CD4-positive, alpha-beta memory T cell (primary cell): ENCODE measurements at regions of chr10 and their contacts with region 1.

Region 1: DNA sequence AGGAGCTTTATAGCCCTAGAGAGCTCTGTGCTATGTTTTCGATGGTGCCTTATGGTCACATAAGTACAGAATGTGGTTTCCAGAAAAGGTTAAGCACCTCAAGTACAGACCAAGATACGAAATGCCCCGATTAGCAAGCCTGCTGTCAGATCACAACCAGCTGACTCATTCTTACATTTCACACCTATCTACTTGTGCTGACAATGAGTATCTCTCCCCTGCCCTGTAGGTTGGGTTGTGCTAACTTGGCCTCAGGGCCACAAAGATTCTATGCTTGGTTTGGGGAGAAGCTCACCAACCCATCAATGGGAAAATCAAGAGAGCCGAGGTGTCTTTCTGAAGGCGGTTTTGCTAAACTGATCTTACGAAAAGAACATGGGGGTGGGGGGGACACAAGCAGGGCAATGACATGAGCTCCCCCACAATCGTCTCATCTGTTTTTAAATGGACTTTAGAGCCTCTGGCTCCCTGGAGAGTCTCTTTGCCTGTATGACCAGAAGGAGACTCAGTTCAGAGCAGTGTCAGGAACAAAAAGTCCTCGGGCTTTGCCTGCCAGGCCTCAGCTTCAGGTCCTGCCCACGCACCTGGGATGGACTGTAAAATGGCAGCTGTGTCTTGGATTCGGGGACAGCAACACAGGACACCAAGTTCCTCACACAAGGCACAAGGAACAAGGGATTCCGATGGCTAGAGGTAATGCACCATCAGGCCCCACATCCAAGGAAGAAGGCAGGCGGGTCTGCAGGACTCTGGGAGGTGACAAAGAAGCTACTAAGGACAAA is 55.1 kb downstream of the FAM53B start:
- DNase-seq: peak; percentile 50 to 81 (median 52)
- H3K4me3 ChIP-seq: no peak overlapping the region
- H3K4me3 Mint-ChIP-seq: peak overlapping the region in 7 of 8 donors; percentile 9 to 88 (median 76)
- H3K27ac ChIP-seq: peak overlapping the region; percentile 42
- H3K27ac Mint-ChIP-seq: peak overlapping the region; percentile 87 to 98 (median 91)
- H3K4me1 ChIP-seq: peaks cover 95% of the 10 kb centered on the region
- H3K4me1 Mint-ChIP-seq: peaks cover 59 to 94% (median 79%) of the 10 kb centered on the region in 4 donors
- H3K27me3 ChIP-seq: no peaks in the 10 kb centered on the region
- H3K27me3 Mint-ChIP-seq: no peaks in the 10 kb centered on the region

Region 2: DNA sequence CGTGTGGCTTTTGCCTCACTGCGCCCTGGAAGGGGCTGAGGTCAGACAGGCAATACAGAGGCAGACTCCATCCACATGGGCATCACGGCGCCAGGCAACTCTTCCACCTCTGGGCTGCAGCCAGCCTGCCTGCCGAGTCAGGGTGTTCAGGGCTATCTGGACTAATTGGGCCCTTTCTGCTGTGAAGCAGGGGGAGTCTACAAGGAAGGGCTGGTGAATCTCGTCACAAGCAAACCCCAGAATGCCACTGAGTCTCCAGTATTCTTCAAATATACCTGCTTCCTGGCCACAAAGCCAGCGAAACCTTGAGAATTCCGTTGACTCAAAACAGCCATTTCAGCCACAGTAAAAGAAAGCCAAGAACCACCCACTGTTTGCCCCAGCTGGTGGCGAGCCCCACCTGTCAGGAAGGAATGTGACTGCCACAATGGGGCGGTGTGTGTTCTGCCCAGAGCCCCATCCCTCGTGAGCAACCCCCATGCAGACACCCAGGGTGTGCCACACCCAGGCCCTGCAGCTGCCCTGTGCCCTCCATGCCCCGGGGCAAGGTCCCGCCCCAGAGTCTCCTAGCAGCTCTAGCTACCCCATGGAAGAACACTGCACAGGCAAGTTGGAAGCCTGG is 62.2 kb before region 1 on chr10:
- CTCF ChIA-PET with region 1: interaction called, 5 read pairs
- POLR2A ChIA-PET with region 1: interaction called, 10 read pairs
- intact Hi-C with region 1: no loop called
- DNase-seq: peak; percentile 46 to 60 (median 55)
- H3K4me3 ChIP-seq: peak overlapping the region; percentile 11 to 14
- H3K4me3 Mint-ChIP-seq: peak overlapping the region in 7 of 8 donors; percentile 36 to 76 (median 69)
- H3K27ac ChIP-seq: peak overlapping the region; percentile 49
- H3K27ac Mint-ChIP-seq: peak overlapping the region; percentile 82 to 96 (median 89)
- H3K4me1 ChIP-seq: peaks cover 68% of the 10 kb centered on the region
- H3K4me1 Mint-ChIP-seq: peaks cover 34 to 81% (median 50%) of the 10 kb centered on the region in 4 donors
- H3K27me3 ChIP-seq: no peaks in the 10 kb centered on the region
- H3K27me3 Mint-ChIP-seq: no peaks in the 10 kb centered on the region

Region 3: GRCh38 chr10:124657806-124658205 is 31.3 kb before region 1 on chr10:
- CTCF ChIA-PET with region 1: interaction called, 10 read pairs
- POLR2A ChIA-PET with region 1: interaction called, 15 read pairs
- intact Hi-C with region 1: no loop called
- DNase-seq: peak; percentile 60 to 79 (median 77)
- H3K4me3 ChIP-seq: peak overlapping the region; percentile 13 to 36
- H3K4me3 Mint-ChIP-seq: peak overlapping the region; percentile 31 to 87 (median 78)
- H3K27ac ChIP-seq: peak overlapping the region; percentile 67
- H3K27ac Mint-ChIP-seq: peak overlapping the region; percentile 88 to 98 (median 95)
- H3K4me1 ChIP-seq: peaks cover 92% of the 10 kb centered on the region
- H3K4me1 Mint-ChIP-seq: peaks cover 68 to 97% (median 84%) of the 10 kb centered on the region in 4 donors
- H3K27me3 ChIP-seq: no peaks in the 10 kb centered on the region
- H3K27me3 Mint-ChIP-seq: no peaks in the 10 kb centered on the region

Region 4: DNA sequence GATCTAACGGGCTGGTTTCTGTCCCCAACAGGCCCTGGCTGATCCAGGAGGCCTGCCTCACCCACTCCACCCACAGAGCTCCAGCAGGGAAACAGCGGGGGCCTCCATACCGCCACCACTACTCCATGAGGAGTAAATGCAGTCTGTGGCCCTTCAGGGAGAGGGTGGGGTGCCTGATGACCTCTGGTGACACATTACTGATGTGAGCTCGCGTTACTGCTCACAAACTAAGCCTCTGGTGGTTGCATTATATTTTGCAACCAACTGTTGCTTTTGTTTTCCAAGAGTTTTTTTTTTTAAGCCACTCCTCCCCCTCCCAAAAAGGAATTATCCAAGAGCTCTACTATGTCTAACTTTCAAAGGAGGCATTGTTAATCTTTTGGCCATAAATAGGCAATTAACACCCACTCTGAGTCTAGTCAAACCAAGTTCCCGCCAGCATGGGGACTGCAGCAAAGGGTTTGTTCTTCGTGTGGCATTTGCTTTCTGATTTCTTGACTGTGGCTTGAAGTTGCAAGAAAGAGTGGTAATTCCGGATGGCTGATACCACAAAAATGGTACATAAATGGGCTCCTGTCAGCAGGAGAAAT is 17.5 kb before region 1 on chr10:
- CTCF ChIA-PET with region 1: interaction called, 14 read pairs
- POLR2A ChIA-PET with region 1: interaction called, 10 read pairs
- intact Hi-C with region 1: no loop called
- DNase-seq: peak in 1 of 5 donors; percentile 33
- H3K4me3 ChIP-seq: no peak overlapping the region
- H3K4me3 Mint-ChIP-seq: peak overlapping the region in 7 of 8 donors; percentile 53 to 84 (median 67)
- H3K27ac ChIP-seq: peak overlapping the region; percentile 43
- H3K27ac Mint-ChIP-seq: peak overlapping the region; percentile 83 to 96 (median 90)
- H3K4me1 ChIP-seq: peaks cover 100% of the 10 kb centered on the region
- H3K4me1 Mint-ChIP-seq: peaks cover 68 to 99% (median 88%) of the 10 kb centered on the region in 4 donors
- H3K27me3 ChIP-seq: no peaks in the 10 kb centered on the region
- H3K27me3 Mint-ChIP-seq: no peaks in the 10 kb centered on the region

Region 5: GRCh38 chr10:124677749-124678556 is 11.1 kb before region 1 on chr10:
- CTCF ChIA-PET with region 1: interaction called, 25 read pairs
- POLR2A ChIA-PET with region 1: interaction called, 42 read pairs
- intact Hi-C with region 1: no loop called
- DNase-seq: no peak
- H3K4me3 ChIP-seq: peak overlapping the region; percentile 36 to 56
- H3K4me3 Mint-ChIP-seq: peak overlapping the region; percentile 76 to 88 (median 79)
- H3K27ac ChIP-seq: peak overlapping the region; percentile 54
- H3K27ac Mint-ChIP-seq: peak overlapping the region; percentile 85 to 97 (median 92)
- H3K4me1 ChIP-seq: peaks cover 96% of the 10 kb centered on the region
- H3K4me1 Mint-ChIP-seq: peaks cover 70 to 99% (median 89%) of the 10 kb centered on the region in 4 donors
- H3K27me3 ChIP-seq: no peaks in the 10 kb centered on the region
- H3K27me3 Mint-ChIP-seq: no peaks in the 10 kb centered on the region

Region 6: GRCh38 chr10:124703778-124704427 is 14.8 kb after region 1 on chr10:
- CTCF ChIA-PET with region 1: interaction called, 50 read pairs
- POLR2A ChIA-PET with region 1: interaction called, 48 read pairs
- intact Hi-C with region 1: loop called (anchors 2 kb)
- DNase-seq: peak in 1 of 5 donors; percentile 15
- H3K4me3 ChIP-seq: no peak overlapping the region
- H3K4me3 Mint-ChIP-seq: peak overlapping the region in 7 of 8 donors; percentile 23 to 90 (median 58)
- H3K27ac ChIP-seq: peak overlapping the region; percentile 90
- H3K27ac Mint-ChIP-seq: peak overlapping the region; percentile 95 to 99 (median 97)
- H3K4me1 ChIP-seq: peaks cover 100% of the 10 kb centered on the region
- H3K4me1 Mint-ChIP-seq: peaks cover 72 to 100% (median 93%) of the 10 kb centered on the region in 4 donors
- H3K27me3 ChIP-seq: no peaks in the 10 kb centered on the region
- H3K27me3 Mint-ChIP-seq: no peaks in the 10 kb centered on the region

Region 7: GRCh38 chr10:124708922-124709520 is 19.9 kb after region 1 on chr10:
- CTCF ChIA-PET with region 1: interaction called, 120 read pairs
- POLR2A ChIA-PET with region 1: interaction called, 16 read pairs
- intact Hi-C with region 1: no loop called
- DNase-seq: peak in 1 of 5 donors; percentile 53
- H3K4me3 ChIP-seq: no peak overlapping the region
- H3K4me3 Mint-ChIP-seq: peak overlapping the region in 7 of 8 donors; percentile 40 to 77 (median 57)
- H3K27ac ChIP-seq: peak overlapping the region; percentile 90
- H3K27ac Mint-ChIP-seq: peak overlapping the region; percentile 90 to 97 (median 95)
- H3K4me1 ChIP-seq: peaks cover 97% of the 10 kb centered on the region
- H3K4me1 Mint-ChIP-seq: peaks cover 78 to 93% (median 86%) of the 10 kb centered on the region in 4 donors
- H3K27me3 ChIP-seq: no peaks in the 10 kb centered on the region
- H3K27me3 Mint-ChIP-seq: no peaks in the 10 kb centered on the region